ENCODE measurements at regions of chr5 and their contacts with region 1.

Region 1: GRCh38 chr5:6712577-6713275 is 506 bp upstream of the TENT4A start:
- DNase-seq: peak; percentile 99

Region 2: GRCh38 chr5:6454628-6455053 is 258.1 kb before region 1 on chr5:
- intact Hi-C with region 1: loop called (anchors 5 kb)
- DNase-seq: peak; percentile 79

Region 3: DNA sequence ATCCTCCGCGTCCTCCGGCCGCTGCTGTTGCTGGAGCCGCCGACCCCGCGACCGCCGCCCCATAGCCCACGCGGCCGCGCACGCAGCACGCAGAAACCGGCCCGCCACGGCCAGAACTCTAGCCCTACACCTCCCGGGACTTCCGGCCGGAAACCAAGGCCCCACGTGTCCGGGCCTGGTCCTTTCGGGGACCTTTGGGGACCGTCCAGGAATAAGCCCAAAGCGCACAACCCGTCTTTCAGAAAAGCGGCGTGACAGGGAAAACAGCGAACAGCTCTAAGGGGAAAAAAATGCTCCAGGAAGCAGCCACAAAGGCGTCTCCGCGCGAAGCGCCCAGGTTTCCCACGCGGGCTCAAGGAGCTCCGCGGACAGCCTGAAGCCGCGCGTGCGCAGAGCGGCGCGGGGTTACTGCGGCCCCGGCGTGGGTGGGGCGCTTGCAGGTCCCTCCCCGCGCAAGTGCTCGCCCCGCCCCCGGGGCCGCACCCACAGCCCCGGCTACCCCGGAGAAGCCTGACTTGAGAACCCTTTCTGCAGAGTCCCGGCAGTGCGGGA is 79.7 kb before region 1 on chr5 and contains the starts of genes NSUN2 and SRD5A1:
- intact Hi-C with region 1: loop called (anchors 1 kb)
- DNase-seq: peak; percentile 96
- total RNA-seq, gene NSUN2: 39.9 TPM
- total RNA-seq, gene SRD5A1: 4.2 TPM

Region 4: DNA sequence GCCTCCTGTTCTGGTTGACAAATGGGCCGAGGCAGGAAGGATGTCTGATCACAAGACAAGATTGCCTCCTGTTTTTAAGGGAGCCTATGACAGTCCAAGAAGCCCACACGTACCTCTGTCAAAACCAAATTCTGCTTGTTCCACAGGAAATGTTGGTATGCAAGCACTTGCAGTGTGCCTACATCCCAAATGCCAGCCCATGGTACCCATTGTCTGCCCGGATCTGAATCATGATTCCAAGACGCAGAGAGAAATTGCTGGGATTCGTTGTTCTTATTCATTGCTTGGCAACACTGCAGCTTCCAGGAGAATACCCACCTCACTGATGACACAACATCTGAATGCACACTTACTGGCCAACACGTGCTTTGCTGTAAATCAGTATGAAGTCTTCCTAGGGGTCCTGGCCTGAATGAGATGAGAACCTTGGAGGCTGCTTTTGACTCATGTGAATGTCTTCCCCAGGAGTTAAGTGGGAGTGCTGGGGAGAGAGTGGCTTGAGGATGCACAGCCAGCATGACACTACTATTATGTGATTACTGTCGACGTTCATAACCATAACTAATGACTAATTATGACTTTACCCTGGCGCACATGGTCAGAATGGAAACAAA is 68.0 kb before region 1 on chr5:
- intact Hi-C with region 1: no loop called
- DNase-seq: no peak

Measured in cardiac septum (tissue), 1 donor.